Naive thymus-derived CD4-positive, alpha-beta T cell (primary cell): ENCODE measurements at regions of chr16 and their contacts with region 1.

Region 1: GRCh38 chr16:89560378-89561141 is at the start of gene RPL13:
- DNase-seq: peak; percentile 79 to 95 (median 92)
- ATAC-seq: peak; percentile 96
- H3K4me3 ChIP-seq: peak within 1 kb of the TSS; percentile 97
- H3K4me3 Mint-ChIP-seq: peak within 1 kb of the TSS; percentile 85 to 99 (median 96)
- H3K27ac ChIP-seq: peak within 1 kb of the TSS; percentile 87
- H3K27ac Mint-ChIP-seq: peak within 1 kb of the TSS; percentile 92 to 99 (median 98)
- H3K4me1 ChIP-seq: peaks cover 24 to 42% of the 10 kb centered on the region in 2 donors
- H3K4me1 Mint-ChIP-seq: peaks cover 33 to 63% (median 55%) of the 10 kb centered on the region in 7 donors
- H3K27me3 ChIP-seq: no peaks in the 10 kb centered on the region
- H3K27me3 Mint-ChIP-seq: no peaks in the 10 kb centered on the region
- total RNA-seq, gene RPL13: 2,239 to 5,631 (median 5,332) TPM

Region 2: GRCh38 chr16:87950765-87951549 is 1609.6 kb before region 1 on chr16 and contains the start of gene BANP:
- CTCF ChIA-PET with region 1: no interaction called
- POLR2A ChIA-PET with region 1: no interaction called
- intact Hi-C with region 1: loop called in 1 of 2 experiments (anchors 5 kb)
- DNase-seq: peak; percentile 96 to 99 (median 99)
- ATAC-seq: peak; percentile 93
- H3K4me3 ChIP-seq: peak within 1 kb of the TSS; percentile 83
- H3K4me3 Mint-ChIP-seq: peak within 1 kb of the TSS; percentile 92 to 100 (median 99)
- H3K27ac ChIP-seq: peak within 1 kb of the TSS; percentile 90
- H3K27ac Mint-ChIP-seq: peak within 1 kb of the TSS; percentile 97 to 100 (median 99)
- H3K4me1 ChIP-seq: peaks cover 15 to 33% of the 10 kb centered on the region in 2 donors
- H3K4me1 Mint-ChIP-seq: peaks cover 27 to 66% (median 43%) of the 10 kb centered on the region in 7 donors
- H3K27me3 ChIP-seq: no peaks in the 10 kb centered on the region
- H3K27me3 Mint-ChIP-seq: peaks cover 0 to 8% (median 2%) of the 10 kb centered on the region in 5 donors
- total RNA-seq, gene BANP: 43.6 to 81.2 (median 68.5) TPM

Region 3: DNA sequence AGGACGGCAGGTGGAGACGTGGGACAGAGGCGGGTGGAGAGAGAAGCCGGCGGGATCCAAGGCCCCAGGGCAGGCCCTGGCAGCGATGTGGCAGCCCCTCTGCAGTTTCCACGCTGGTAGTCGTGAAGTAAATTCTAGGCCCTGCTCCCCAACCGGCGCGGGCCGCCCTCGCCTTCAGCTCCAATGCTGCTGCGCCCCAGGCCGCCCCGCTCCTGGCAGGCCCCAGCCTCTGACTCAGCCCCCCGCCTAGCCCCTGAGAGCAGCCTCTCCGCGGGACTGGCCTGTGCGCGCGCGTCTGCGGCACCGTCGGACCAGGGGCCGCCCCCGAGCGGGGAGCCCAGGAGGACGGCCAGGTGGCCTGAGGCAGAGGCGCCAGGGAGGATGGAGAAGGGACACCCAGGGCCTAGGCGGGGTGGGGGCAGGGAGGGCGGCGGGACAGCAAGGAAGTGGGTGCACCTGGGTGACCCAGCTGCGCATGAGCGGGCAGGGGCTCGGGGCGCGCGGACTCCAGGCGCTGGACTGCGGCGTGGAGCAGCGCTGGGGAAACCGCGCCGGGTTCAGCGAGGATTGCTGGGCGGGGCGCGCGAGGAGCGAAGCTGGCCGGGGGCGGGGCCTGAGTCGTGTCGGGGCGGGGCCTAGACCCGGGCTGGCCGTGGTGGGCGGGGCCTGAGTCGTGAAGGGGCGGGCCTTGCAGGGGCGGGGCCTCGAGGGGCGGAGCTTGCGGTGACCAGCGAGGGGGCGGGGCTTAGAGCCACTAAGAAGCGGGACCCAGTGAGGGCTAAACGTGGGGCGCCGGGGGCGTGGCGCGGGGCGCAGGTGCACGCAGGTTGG is 313.4 kb before region 1 on chr16:
- CTCF ChIA-PET with region 1: no interaction called
- POLR2A ChIA-PET with region 1: no interaction called
- intact Hi-C with region 1: loop called in 1 of 2 experiments (anchors 1 kb)
- DNase-seq: peak; percentile 85 to 99 (median 93)
- ATAC-seq: peak; percentile 99
- H3K4me3 ChIP-seq: peak overlapping the region; percentile 17
- H3K4me3 Mint-ChIP-seq: peak overlapping the region; percentile 70 to 92 (median 78)
- H3K27ac ChIP-seq: peak overlapping the region; percentile 62
- H3K27ac Mint-ChIP-seq: peak overlapping the region in 5 of 9 donors; percentile 40 to 89 (median 76)
- H3K4me1 ChIP-seq: peaks cover 0 to 5% of the 10 kb centered on the region in 2 donors
- H3K4me1 Mint-ChIP-seq: peaks cover 3 to 31% (median 21%) of the 10 kb centered on the region in 7 donors
- H3K27me3 ChIP-seq: no peaks in the 10 kb centered on the region
- H3K27me3 Mint-ChIP-seq: peaks cover 0 to 6% (median 0%) of the 10 kb centered on the region in 5 donors

Region 4: DNA sequence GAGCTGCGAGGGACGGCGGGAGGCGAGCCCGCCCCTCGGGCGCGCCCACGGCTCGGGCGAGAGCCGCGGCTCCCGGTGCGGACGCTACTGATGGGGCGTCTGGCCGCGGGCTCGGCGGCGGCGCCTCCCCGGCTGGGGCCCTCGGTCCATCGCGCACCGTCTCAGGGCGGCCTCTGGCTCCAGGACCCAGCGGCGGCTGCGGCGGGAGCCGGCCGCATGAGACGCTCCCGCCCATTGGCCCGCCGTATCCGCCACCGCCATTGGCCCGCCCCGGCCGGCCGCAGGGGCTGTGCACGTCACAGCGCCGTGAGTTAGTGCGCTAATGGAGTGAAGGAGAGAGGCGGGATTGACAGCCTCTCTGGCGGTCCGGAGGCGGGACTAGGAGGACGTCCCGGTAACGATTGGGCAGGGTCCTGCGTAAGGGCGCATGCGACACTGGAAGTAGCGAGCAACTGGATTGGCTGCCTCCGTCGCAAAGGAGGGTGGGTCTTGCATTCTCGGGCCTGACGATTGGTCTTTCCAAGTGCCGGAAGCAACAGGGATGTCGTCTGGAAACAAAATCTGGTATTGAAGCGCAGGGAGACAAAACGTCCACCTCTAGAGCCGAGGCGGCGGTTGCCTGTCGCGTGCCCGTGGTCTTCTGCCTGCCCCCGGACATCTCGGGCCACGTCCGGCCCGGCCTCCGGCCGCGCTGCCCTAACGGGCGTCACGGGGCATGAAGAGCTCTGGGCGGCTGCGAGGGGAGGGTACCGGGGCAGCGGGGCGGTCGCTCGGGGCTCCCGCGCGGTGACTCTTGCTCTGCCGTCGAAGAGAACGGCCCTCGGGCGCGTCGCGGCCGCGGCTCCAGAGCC is 69.9 kb before region 1 on chr16 and contains the start of gene ANKRD11:
- CTCF ChIA-PET with region 1: no interaction called
- POLR2A ChIA-PET with region 1: interaction called, 3 read pairs
- intact Hi-C with region 1: loop called (anchors 1 kb)
- DNase-seq: peak; percentile 99 to 100 (median 99)
- ATAC-seq: peak; percentile 93
- H3K4me3 ChIP-seq: peak within 1 kb of the TSS; percentile 92
- H3K4me3 Mint-ChIP-seq: peak within 1 kb of the TSS; percentile 89 to 98 (median 94)
- H3K27ac ChIP-seq: peak within 1 kb of the TSS; percentile 90
- H3K27ac Mint-ChIP-seq: peak within 1 kb of the TSS; percentile 92 to 99 (median 97)
- H3K4me1 ChIP-seq: peaks cover 44 to 48% of the 10 kb centered on the region in 2 donors
- H3K4me1 Mint-ChIP-seq: peaks cover 48 to 73% (median 53%) of the 10 kb centered on the region in 7 donors
- H3K27me3 ChIP-seq: no peaks in the 10 kb centered on the region
- H3K27me3 Mint-ChIP-seq: peaks cover 0 to 2% (median 0%) of the 10 kb centered on the region in 5 donors
- total RNA-seq, gene ANKRD11: 178 to 254 (median 240) TPM

Region 5: GRCh38 chr16:89549007-89549700 is 11.4 kb before region 1 on chr16:
- CTCF ChIA-PET with region 1: interaction called, 3 read pairs
- POLR2A ChIA-PET with region 1: interaction called, 9 read pairs
- intact Hi-C with region 1: loop called in 1 of 2 experiments (anchors 1 kb)
- DNase-seq: peak in 7 of 9 donors; percentile 50 to 74 (median 63)
- ATAC-seq: peak; percentile 87
- H3K4me3 ChIP-seq: no peak overlapping the region
- H3K4me3 Mint-ChIP-seq: peak overlapping the region; percentile 34 to 79 (median 72)
- H3K27ac ChIP-seq: peak overlapping the region; percentile 54
- H3K27ac Mint-ChIP-seq: peak overlapping the region; percentile 73 to 97 (median 89)
- H3K4me1 ChIP-seq: peaks cover 0 to 19% of the 10 kb centered on the region in 2 donors
- H3K4me1 Mint-ChIP-seq: peaks cover 13 to 31% (median 19%) of the 10 kb centered on the region in 7 donors
- H3K27me3 ChIP-seq: no peaks in the 10 kb centered on the region
- H3K27me3 Mint-ChIP-seq: no peaks in the 10 kb centered on the region

Region 6: GRCh38 chr16:89686520-89687091 is 126.0 kb after region 1 on chr16 and contains the start of gene CDK10:
- CTCF ChIA-PET with region 1: no interaction called
- POLR2A ChIA-PET with region 1: no interaction called
- intact Hi-C with region 1: loop called in 1 of 2 experiments (anchors 1 kb)
- DNase-seq: peak; percentile 80 to 97 (median 89)
- ATAC-seq: peak; percentile 90
- H3K4me3 ChIP-seq: peak within 1 kb of the TSS; percentile 96
- H3K4me3 Mint-ChIP-seq: peak within 1 kb of the TSS; percentile 86 to 96 (median 92)
- H3K27ac ChIP-seq: peak within 1 kb of the TSS; percentile 93
- H3K27ac Mint-ChIP-seq: peak within 1 kb of the TSS; percentile 80 to 95 (median 92)
- H3K4me1 ChIP-seq: peaks cover 0 to 7% of the 10 kb centered on the region in 2 donors
- H3K4me1 Mint-ChIP-seq: peaks cover 9 to 18% (median 17%) of the 10 kb centered on the region in 7 donors
- H3K27me3 ChIP-seq: no peaks in the 10 kb centered on the region
- H3K27me3 Mint-ChIP-seq: no peaks in the 10 kb centered on the region
- total RNA-seq, gene CDK10: 91.5 to 150 (median 102) TPM

Region 7: GRCh38 chr16:89764711-89765201 is 204.2 kb after region 1 on chr16:
- CTCF ChIA-PET with region 1: no interaction called
- POLR2A ChIA-PET with region 1: no interaction called
- intact Hi-C with region 1: no loop called
- DNase-seq: no peak
- ATAC-seq: peak; percentile 81
- H3K4me3 ChIP-seq: peak overlapping the region; percentile 58
- H3K4me3 Mint-ChIP-seq: peak overlapping the region; percentile 56 to 94 (median 69)
- H3K27ac ChIP-seq: peak overlapping the region; percentile 43
- H3K27ac Mint-ChIP-seq: peak overlapping the region; percentile 49 to 91 (median 85)
- H3K4me1 ChIP-seq: peaks cover 20 to 27% of the 10 kb centered on the region in 2 donors
- H3K4me1 Mint-ChIP-seq: peaks cover 13 to 42% (median 33%) of the 10 kb centered on the region in 7 donors
- H3K27me3 ChIP-seq: no peaks in the 10 kb centered on the region
- H3K27me3 Mint-ChIP-seq: no peaks in the 10 kb centered on the region

Region 8: GRCh38 chr16:89972244-89973234 is 412.0 kb after region 1 on chr16:
- CTCF ChIA-PET with region 1: no interaction called
- POLR2A ChIA-PET with region 1: no interaction called
- intact Hi-C with region 1: loop called in 1 of 2 experiments (anchors 5 kb)
- DNase-seq: peak; percentile 86 to 97 (median 92)
- ATAC-seq: peak; percentile 96
- H3K4me3 ChIP-seq: peak overlapping the region; percentile 97
- H3K4me3 Mint-ChIP-seq: peak overlapping the region; percentile 96 to 100 (median 99)
- H3K27ac ChIP-seq: peak overlapping the region; percentile 82
- H3K27ac Mint-ChIP-seq: peak overlapping the region; percentile 89 to 99 (median 96)
- H3K4me1 ChIP-seq: peaks cover 12 to 22% of the 10 kb centered on the region in 2 donors
- H3K4me1 Mint-ChIP-seq: peaks cover 13 to 45% (median 30%) of the 10 kb centered on the region in 7 donors
- H3K27me3 ChIP-seq: no peaks in the 10 kb centered on the region
- H3K27me3 Mint-ChIP-seq: peaks cover 0 to 2% (median 0%) of the 10 kb centered on the region in 5 donors